Activated T-helper 2 cell treated with anti-CD3 and anti-CD28 coated beads, Interferon-gamma antibody, Interleukin-2, Interleukin-4, amounts not matched to agents 10 μg/mL and 5 μg/mL and 100 μg/mL, durations not matched to agents 14 hours and 24 hours and 36 hours (primary cell): ENCODE measurements at regions of chr7 and their contacts with region 1.

Region 1: GRCh38 chr7:10973061-10973944 is at the start of gene PHF14:
- DNase-seq: peak; percentile 95
- H3K4me3 Mint-ChIP-seq: peak within 1 kb of the TSS; percentile 95
- H3K27ac Mint-ChIP-seq: peak within 1 kb of the TSS; percentile 92
- H3K4me1 Mint-ChIP-seq: peaks cover 40% of the 10 kb centered on the region
- H3K27me3 Mint-ChIP-seq: peaks cover 17% of the 10 kb centered on the region
- total RNA-seq, gene PHF14: 39.3 and 43.2 TPM in 2 replicates

Region 2: GRCh38 chr7:10720047-10720446 is 253.3 kb before region 1 on chr7:
- intact Hi-C with region 1: no loop called
- DNase-seq: no peak
- H3K4me3 Mint-ChIP-seq: no peak overlapping the region
- H3K27ac Mint-ChIP-seq: no peak overlapping the region
- H3K4me1 Mint-ChIP-seq: no peaks in the 10 kb centered on the region
- H3K27me3 Mint-ChIP-seq: no peaks in the 10 kb centered on the region

Region 3: DNA sequence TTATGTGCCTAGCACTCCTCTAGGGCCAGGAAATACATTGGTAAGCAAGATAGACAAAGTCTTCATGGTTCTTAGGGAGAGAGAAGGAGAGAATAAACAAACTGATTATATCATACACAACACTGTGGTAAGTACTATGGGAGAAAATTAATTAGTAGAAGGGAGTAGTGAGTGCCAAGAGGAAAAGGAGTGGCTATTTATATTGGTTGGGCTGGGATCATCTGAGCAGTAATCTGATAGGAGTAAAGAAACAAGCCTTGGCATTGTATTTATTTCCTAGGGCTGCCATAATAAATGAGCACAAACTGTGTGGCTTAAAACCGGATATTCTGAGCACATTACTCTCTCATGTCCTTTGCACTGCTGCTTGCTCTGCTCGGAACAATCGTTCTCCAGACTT is 157.8 kb before region 1 on chr7:
- intact Hi-C with region 1: no loop called
- DNase-seq: no peak
- H3K4me3 Mint-ChIP-seq: no peak overlapping the region
- H3K27ac Mint-ChIP-seq: no peak overlapping the region
- H3K4me1 Mint-ChIP-seq: no peaks in the 10 kb centered on the region
- H3K27me3 Mint-ChIP-seq: no peaks in the 10 kb centered on the region

Region 4: GRCh38 chr7:10939911-10940703 is 33.2 kb before region 1 on chr7:
- intact Hi-C with region 1: loop called (anchors 1 kb)
- DNase-seq: peak; percentile 82
- H3K4me3 Mint-ChIP-seq: no peak overlapping the region
- H3K27ac Mint-ChIP-seq: no peak overlapping the region
- H3K4me1 Mint-ChIP-seq: peaks cover 14% of the 10 kb centered on the region
- H3K27me3 Mint-ChIP-seq: no peaks in the 10 kb centered on the region

Region 5: DNA sequence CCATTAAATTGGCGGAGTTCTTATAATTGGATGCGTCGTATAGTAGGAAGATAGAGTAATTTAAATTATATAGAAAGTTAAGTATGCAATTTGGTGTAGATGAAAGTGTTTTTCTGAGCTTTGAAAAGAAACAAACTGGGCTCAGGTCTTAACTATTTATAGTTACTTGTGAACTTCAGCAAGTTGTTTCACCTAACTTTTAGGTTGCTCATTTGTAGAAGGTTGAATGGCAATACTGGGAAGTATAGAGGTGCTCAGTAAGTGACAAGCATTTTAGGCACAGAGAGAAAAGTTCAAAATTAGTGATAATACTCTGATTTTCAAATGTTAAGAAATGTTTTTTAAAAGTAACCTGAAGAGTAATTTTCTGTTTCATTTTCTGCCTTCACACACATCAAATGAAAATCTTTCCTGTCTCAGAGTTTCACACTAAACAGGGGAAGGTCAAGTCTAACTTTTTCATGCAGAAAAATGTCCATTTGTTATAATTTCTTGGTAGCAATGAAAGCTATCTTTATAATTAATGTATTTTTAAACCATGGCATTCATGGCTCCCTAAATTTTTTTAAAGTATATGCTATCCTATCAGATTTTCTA is 146.9 kb after region 1 on chr7:
- intact Hi-C with region 1: loop called (anchors 2 kb)
- DNase-seq: no peak
- H3K4me3 Mint-ChIP-seq: peak overlapping the region; percentile 37
- H3K27ac Mint-ChIP-seq: peak overlapping the region; percentile 79
- H3K4me1 Mint-ChIP-seq: peaks cover 40% of the 10 kb centered on the region
- H3K27me3 Mint-ChIP-seq: no peaks in the 10 kb centered on the region

Region 6: DNA sequence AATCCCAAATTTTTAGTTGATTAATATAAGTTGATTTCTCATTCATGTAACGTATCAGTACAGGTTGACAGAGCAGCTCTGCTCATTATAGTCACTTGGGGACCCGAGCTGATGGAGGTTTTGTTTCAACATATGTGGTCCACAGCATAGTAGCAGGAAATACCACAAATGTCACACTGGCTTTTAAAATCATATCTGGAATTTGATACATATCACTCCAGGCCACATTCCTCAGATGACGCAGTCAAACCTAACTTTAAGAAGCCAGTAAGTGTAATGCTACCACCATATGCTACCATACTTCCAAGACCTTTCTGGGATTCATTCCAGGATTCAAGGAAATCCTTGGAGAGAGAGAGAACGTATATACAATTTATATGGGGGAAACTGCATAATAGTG is 156.7 kb after region 1 on chr7:
- intact Hi-C with region 1: loop called (anchors 1 kb)
- DNase-seq: no peak
- H3K4me3 Mint-ChIP-seq: no peak overlapping the region
- H3K27ac Mint-ChIP-seq: peak overlapping the region; percentile 72
- H3K4me1 Mint-ChIP-seq: peaks cover 56% of the 10 kb centered on the region
- H3K27me3 Mint-ChIP-seq: no peaks in the 10 kb centered on the region

Region 7: DNA sequence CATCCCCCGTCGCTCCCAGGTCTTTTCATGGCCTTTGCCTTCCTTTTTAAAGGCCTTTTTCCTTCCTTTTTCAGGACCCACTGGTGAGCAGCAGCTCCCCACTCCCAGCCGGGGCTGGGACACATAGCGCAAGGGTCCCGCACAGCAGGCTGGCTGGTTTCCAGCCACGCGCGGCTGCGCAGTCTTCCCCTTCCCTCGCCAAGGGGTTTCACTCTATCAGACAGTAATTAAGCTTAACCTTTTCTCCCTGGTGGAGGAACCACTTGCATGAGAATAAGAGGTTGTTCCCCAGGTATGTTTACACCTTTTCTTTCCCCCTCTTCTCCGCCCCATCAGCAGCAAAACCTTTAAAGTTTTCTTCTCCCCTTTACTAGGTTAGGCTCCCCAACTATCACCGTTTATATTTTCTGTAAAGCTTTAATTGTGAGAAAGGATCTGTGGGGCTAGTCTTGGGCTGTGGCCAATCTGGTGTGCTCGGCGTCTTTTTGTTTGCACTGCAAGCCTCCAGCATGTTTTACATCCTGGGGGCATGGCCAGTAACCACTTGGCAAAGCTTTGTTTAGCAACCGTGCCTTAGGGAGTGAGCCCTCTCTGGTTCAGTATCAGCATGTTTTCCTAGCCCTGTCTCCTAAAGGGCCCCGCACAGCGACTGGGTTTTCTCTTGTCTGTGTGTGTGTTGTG is 220.0 kb after region 1 on chr7:
- intact Hi-C with region 1: loop called (anchors 1 kb)
- DNase-seq: no peak
- H3K4me3 Mint-ChIP-seq: peak overlapping the region; percentile 81
- H3K27ac Mint-ChIP-seq: peak overlapping the region; percentile 77
- H3K4me1 Mint-ChIP-seq: peaks cover 29% of the 10 kb centered on the region
- H3K27me3 Mint-ChIP-seq: peaks cover 2% of the 10 kb centered on the region

Region 8: GRCh38 chr7:11343818-11344413 is 370.6 kb after region 1 on chr7:
- intact Hi-C with region 1: loop called (anchors 5 kb)
- DNase-seq: no peak
- H3K4me3 Mint-ChIP-seq: no peak overlapping the region
- H3K27ac Mint-ChIP-seq: no peak overlapping the region
- H3K4me1 Mint-ChIP-seq: peaks cover 5% of the 10 kb centered on the region
- H3K27me3 Mint-ChIP-seq: peaks cover 16% of the 10 kb centered on the region